T-cell (primary cell): ENCODE measurements at regions of chr12 and their contacts with region 1.

Region 1: DNA sequence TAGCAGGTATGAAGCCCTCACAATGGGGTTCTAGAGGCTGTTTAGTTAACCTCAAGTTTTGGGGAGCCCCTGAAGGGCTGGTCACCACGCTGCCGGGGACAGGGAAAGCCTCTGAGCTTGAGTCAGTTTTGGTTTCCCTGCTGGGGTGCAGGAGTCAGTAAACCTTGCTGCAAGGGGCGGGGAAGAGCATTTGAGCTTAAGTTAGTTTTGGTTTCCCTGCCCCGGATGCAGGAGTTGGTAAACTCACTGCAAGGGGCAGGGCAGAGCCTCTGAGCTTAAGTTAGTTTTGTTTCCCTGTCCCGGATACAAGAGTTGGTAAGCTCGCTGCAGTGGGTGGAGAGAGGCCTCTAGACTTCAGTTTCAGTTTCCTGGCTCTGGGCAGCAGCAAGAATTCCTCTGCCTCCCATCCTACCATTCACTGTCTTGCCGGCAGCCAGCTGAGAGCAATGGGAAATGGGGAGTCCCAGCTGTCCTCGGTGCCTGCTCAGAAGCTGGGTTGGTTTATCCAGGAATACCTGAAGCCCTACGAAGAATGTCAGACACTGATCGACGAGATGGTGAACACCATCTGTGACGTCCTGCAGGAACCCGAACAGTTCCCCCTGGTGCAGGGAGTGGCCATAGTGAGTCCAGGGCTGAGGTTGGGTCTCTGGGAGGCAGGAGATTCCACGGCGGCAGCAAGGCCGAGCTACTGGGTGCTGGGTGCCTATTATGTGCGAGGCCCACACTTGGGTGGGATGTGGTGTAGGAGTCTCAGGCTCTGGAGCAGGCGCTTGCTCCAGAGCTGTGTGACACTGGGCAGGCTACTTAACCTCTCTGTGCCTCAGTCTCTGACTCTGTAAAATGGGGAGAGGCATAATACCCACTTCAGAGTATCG is at the start of gene OAS2:
- DNase-seq: peak; percentile 59 to 91 (median 79)
- ATAC-seq: peak; percentile 93 to 96 (median 94)
- H3K4me3 ChIP-seq: peak within 1 kb of the TSS; percentile 94 to 97
- H3K4me3 Mint-ChIP-seq: peak within 1 kb of the TSS; percentile 96 to 99 (median 99)
- H3K27ac ChIP-seq: peak within 1 kb of the TSS; percentile 95
- H3K27ac Mint-ChIP-seq: peak within 1 kb of the TSS; percentile 99
- H3K4me1 ChIP-seq: peaks cover 21% of the 10 kb centered on the region in 2 experiments
- H3K4me1 Mint-ChIP-seq: peaks cover 48 to 59% (median 55%) of the 10 kb centered on the region in 3 donors
- H3K27me3 ChIP-seq: no peaks in the 10 kb centered on the region
- H3K27me3 Mint-ChIP-seq: no peaks in the 10 kb centered on the region
- total RNA-seq, gene OAS2: 44.8 to 75.5 (median 56.9) TPM

Region 2: GRCh38 chr12:112894128-112894527 is 84.3 kb before region 1 on chr12:
- CTCF ChIA-PET with region 1: no interaction called
- POLR2A ChIA-PET with region 1: no interaction called
- DNase-seq: no peak
- ATAC-seq: no peak
- H3K4me3 ChIP-seq: no peak overlapping the region
- H3K4me3 Mint-ChIP-seq: no peak overlapping the region
- H3K27ac ChIP-seq: no peak overlapping the region
- H3K27ac Mint-ChIP-seq: no peak overlapping the region
- H3K4me1 ChIP-seq: no peaks in the 10 kb centered on the region
- H3K4me1 Mint-ChIP-seq: no peaks in the 10 kb centered on the region
- H3K27me3 ChIP-seq: peaks cover 0 to 8% of the 10 kb centered on the region in 2 experiments
- H3K27me3 Mint-ChIP-seq: peaks cover 13 to 18% of the 10 kb centered on the region in 2 donors

Region 3: GRCh38 chr12:112906712-112907414 is 71.5 kb before region 1 on chr12 and contains the start of gene OAS1:
- CTCF ChIA-PET with region 1: interaction called in 1 of 2 experiments, 14 read pairs
- POLR2A ChIA-PET with region 1: interaction called, 4 to 7 read pairs
- DNase-seq: peak in 18 of 35 experiments; percentile 6 to 63 (median 16)
- ATAC-seq: peak; percentile 71 to 82 (median 76)
- H3K4me3 ChIP-seq: peak within 1 kb of the TSS; percentile 60 to 78
- H3K4me3 Mint-ChIP-seq: peak within 1 kb of the TSS; percentile 86 to 92 (median 88)
- H3K27ac ChIP-seq: peak within 1 kb of the TSS; percentile 67
- H3K27ac Mint-ChIP-seq: peak within 1 kb of the TSS; percentile 95
- H3K4me1 ChIP-seq: peaks cover 35 to 59% of the 10 kb centered on the region in 2 experiments
- H3K4me1 Mint-ChIP-seq: peaks cover 72 to 91% (median 80%) of the 10 kb centered on the region in 3 donors
- H3K27me3 ChIP-seq: no peaks in the 10 kb centered on the region
- H3K27me3 Mint-ChIP-seq: no peaks in the 10 kb centered on the region
- total RNA-seq, gene OAS1: 8.5 to 22.9 (median 11.4) TPM